Activated T-helper 2 cell treated with anti-CD3 and anti-CD28 coated beads, Interferon-gamma antibody, Interleukin-2, Interleukin-4, amounts not matched to agents 10 μg/mL and 5 μg/mL and 100 μg/mL, durations not matched to agents 14 hours and 24 hours and 36 hours (primary cell): ENCODE measurements at regions of chr21 and their contacts with region 1.

Region 1: GRCh38 chr21:14487490-14488432 is 58.4 kb downstream of the SAMSN1 start:
- DNase-seq: no peak
- H3K4me3 Mint-ChIP-seq: peak overlapping the region; percentile 2
- H3K27ac Mint-ChIP-seq: peak overlapping the region; percentile 88
- H3K4me1 Mint-ChIP-seq: peaks cover 69% of the 10 kb centered on the region
- H3K27me3 Mint-ChIP-seq: no peaks in the 10 kb centered on the region

Region 2: GRCh38 chr21:14454016-14455009 is 33.4 kb before region 1 on chr21:
- intact Hi-C with region 1: loop called (anchors 1 kb)
- DNase-seq: no peak
- H3K4me3 Mint-ChIP-seq: no peak overlapping the region
- H3K27ac Mint-ChIP-seq: peak overlapping the region; percentile 67
- H3K4me1 Mint-ChIP-seq: peaks cover 52% of the 10 kb centered on the region
- H3K27me3 Mint-ChIP-seq: no peaks in the 10 kb centered on the region

Region 3: GRCh38 chr21:14469641-14470040 is 18.1 kb before region 1 on chr21:
- intact Hi-C with region 1: loop called (anchors 2 kb)
- DNase-seq: no peak
- H3K4me3 Mint-ChIP-seq: no peak overlapping the region
- H3K27ac Mint-ChIP-seq: no peak overlapping the region
- H3K4me1 Mint-ChIP-seq: peaks cover 7% of the 10 kb centered on the region
- H3K27me3 Mint-ChIP-seq: no peaks in the 10 kb centered on the region

Region 4: GRCh38 chr21:14513804-14514203 is 26.0 kb after region 1 on chr21:
- intact Hi-C with region 1: loop called (anchors 2 kb)
- DNase-seq: no peak
- H3K4me3 Mint-ChIP-seq: no peak overlapping the region
- H3K27ac Mint-ChIP-seq: peak overlapping the region; percentile 18
- H3K4me1 Mint-ChIP-seq: peaks cover 35% of the 10 kb centered on the region
- H3K27me3 Mint-ChIP-seq: no peaks in the 10 kb centered on the region

Region 5: DNA sequence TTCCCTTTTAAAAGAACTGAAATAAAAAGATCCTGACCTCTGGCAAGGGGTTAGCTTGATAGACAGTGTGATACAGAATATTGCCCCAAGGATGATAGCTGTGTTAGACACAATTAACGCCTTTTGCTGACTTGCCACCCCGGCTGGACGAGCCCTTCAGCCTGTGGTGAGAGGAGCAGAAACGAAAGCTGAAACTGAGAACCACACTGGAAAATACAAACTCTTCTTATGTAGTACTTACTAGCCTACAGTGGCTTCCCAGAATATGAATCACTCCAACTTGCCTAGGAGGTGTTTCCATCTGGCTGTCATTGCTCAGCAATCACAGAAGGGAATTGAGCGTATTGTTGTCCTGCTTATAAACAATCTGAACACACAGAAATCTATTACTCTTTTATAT is 35.5 kb after region 1 on chr21:
- intact Hi-C with region 1: loop called (anchors 2 kb)
- DNase-seq: no peak
- H3K4me3 Mint-ChIP-seq: peak overlapping the region; percentile 71
- H3K27ac Mint-ChIP-seq: peak overlapping the region; percentile 91
- H3K4me1 Mint-ChIP-seq: peaks cover 52% of the 10 kb centered on the region
- H3K27me3 Mint-ChIP-seq: no peaks in the 10 kb centered on the region

Region 6: GRCh38 chr21:14699433-14700416 is 212.0 kb after region 1 on chr21:
- intact Hi-C with region 1: no loop called
- DNase-seq: no peak
- H3K4me3 Mint-ChIP-seq: no peak overlapping the region
- H3K27ac Mint-ChIP-seq: no peak overlapping the region
- H3K4me1 Mint-ChIP-seq: peaks cover 2% of the 10 kb centered on the region
- H3K27me3 Mint-ChIP-seq: no peaks in the 10 kb centered on the region